Left ventricle myocardium superior (tissue), 1 donor: ENCODE measurements at regions of chr16 and their contacts with region 1.

Region 1: GRCh38 chr16:89489040-89489721 is 1.2 kb downstream of the ANKRD11 start:
- DNase-seq: peak; percentile 84
- ATAC-seq: peak; percentile 43

Region 2: DNA sequence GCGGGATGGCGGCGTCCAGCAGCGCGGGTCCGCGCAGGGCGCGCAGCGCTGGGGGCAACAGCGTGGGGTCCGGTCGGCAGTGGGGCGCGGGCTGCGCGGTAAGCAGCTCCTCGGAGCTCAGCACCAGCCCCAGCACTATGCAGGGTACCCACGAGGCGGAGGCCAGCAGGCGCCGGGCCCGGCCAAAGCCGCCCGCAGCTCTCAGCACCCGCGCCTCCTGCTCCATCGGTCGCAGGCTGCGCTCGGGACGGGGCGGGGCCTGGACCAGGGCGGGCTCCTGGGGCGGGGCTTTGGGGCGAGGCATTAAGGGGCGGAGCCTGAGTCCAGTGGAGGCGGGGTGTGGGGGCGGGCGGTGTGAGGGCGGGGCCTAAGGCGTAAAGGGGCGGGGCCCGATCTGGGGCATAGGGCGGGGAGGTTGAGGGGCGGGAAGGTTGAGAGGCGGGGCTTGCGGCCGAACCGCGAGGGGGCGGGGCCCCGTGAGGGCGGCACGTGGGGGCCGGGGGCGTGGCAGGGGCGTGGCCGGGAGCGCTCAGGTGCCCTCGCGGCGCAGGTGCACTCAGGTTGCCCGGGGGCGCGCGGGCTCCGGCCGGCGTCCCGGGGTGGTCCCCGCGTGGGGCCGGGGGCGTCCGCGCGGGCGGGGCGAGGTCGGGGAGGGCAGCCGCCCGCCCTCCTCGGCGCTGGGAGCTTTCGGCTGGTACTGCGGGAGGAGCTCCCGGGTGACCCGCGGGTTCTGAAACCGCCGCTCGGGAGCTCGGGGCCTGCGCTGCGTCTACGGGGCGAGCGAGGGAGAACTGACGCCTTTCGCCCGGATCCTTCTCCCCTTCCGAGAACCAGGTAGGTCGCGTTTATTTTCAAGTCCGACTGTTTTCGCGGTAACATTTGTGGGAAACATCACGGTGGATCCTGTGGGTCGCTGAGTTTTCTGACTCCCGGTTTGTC is 287.5 kb before region 1 on chr16:
- intact Hi-C with region 1: no loop called
- DNase-seq: peak; percentile 78
- ATAC-seq: peak; percentile 90

Region 3: GRCh38 chr16:89343501-89344457 is 145.4 kb before region 1 on chr16:
- intact Hi-C with region 1: loop called (anchors 10 kb)
- DNase-seq: peak; percentile 38
- ATAC-seq: peak; percentile 34

Region 4: DNA sequence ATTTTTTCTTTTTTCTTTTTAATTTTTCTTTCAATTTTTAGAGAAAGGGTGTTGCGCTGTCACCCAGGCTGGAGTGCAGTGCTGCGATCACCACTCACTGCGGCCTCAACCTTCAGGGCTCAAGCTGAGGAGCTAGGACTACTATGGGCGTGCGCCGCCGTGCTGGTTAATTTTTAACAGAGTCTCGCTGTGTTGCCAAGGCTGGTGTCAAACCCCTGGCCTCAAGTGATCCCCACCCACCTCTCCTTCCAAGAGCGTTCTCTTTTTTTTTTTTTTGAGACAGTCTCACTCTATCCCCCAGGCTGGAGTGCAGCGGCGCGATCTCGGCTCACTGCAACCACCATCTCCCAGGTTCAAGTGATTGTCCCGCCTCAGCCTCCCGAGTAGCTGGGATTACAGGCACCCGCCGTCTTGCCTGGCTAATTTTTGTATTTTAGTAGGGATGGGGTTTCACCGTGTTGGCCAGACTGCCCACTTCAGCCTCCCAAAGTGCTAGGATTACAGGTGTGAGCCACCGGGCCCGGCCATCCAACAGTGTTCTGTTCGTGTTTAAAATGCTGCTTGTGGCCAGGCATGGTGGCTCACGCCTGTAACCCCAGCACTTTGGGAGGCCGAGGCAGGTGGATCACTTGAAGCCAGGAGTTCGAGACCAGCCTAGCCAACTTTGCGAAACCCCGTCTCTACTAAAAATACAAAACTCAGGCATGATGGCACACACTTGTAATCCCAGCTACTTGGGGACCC is 56.8 kb after region 1 on chr16:
- intact Hi-C with region 1: no loop called
- DNase-seq: no peak
- ATAC-seq: no peak

Region 5: GRCh38 chr16:89906139-89907028 is 417.2 kb after region 1 on chr16:
- intact Hi-C with region 1: no loop called
- DNase-seq: peak; percentile 21
- ATAC-seq: no peak